Left cardiac atrium (tissue), 4 donors: ENCODE measurements at regions of chr11 and their contacts with region 1.

Region 1: DNA sequence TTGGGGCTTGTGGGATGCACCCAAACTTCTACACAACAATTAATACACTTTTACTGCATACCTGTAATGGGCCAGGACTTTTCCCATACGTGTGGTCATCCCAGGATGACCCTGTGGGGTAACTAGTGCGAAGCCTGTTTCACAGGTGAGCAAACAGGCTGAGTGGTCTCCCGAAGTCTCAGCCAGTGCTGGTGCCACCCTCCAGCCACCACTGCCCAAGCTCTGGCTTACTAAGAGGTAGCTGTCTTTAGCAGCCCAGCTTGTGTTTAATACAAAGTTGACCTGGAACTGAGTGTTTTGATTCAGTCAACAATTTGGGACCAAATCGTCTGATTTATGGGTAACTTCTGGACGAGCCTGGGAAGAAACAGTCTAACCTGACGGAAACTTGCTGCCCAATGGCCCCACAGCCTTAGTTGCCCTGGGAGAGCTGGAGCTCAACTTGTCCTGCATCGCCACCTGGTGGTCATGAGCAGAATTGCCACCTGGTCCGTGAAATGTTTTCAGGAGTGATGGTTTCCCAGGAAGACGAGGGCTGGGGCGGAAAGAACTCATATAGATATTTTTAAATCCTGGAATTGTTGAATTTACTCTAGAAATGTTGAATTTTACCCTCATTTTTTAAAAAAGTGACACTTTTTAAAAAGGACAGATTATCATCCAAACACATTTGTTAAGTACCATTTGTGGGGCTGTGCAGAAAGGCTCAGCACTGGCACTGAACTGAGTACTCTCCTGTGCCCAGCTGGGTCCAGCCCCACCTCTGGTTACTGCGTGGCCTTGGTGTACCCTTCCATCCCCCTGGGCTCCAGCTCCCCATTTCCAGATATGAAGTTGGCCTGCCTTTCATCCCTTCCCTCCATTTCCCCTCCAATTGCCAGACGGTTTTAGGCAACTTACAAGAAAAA is 95.5 kb upstream of the PARVA start:
- DNase-seq: peak; percentile 86
- ATAC-seq: peak; percentile 63 to 65

Region 2: GRCh38 chr11:11798586-11799438 is 483.0 kb before region 1 on chr11:
- intact Hi-C with region 1: loop called (anchors 5 kb)
- DNase-seq: peak; percentile 87
- ATAC-seq: peak; percentile 71 to 91

Region 3: DNA sequence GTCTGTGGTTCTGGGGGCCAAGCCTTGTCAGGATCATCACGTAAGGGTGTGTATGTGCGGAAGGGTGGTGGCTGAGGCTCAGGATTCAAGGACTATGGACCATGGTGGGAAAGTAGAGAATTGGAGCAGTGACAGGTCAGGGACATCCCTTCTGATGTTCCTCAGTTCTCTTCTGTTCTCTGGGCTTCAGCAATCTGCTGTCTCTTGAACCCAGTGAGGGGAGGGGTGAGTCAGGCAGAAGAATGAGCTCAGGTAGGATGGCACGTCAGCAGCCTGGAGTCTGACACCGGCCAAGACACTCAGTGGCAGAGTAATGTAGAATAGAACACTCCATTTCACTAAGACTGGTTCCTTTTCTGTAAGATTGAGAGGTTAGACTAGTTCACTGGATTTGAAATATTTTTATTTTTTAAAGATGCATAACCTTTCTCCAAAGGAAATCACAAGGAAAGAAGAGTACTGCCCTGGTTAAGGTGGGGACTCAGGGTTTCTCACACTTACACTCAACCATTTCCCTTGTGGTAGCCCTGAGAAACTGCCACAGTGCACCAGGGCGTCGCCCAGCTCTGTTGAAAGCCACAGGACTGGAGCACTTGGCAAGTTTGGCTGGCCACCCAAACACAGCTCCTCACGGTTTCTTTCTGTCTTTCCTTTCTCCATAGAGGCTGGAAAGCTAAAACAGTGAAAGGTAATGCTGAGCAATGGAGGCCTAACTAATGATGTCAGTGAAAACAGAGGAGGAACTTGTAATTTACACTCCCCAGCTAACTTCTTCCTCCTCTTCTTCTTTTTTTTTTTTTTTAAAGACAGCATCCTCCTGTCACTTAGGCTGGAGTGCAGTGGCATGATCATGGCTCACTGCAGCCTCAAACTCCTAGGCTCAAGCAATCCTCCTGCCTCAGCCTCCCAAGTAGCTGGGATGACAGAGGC is 194.5 kb before region 1 on chr11:
- intact Hi-C with region 1: loop called in 1 of 2 experiments (anchors 2 kb)
- DNase-seq: peak; percentile 48
- ATAC-seq: peak in 1 of 2 donors; percentile 42

Region 4: DNA sequence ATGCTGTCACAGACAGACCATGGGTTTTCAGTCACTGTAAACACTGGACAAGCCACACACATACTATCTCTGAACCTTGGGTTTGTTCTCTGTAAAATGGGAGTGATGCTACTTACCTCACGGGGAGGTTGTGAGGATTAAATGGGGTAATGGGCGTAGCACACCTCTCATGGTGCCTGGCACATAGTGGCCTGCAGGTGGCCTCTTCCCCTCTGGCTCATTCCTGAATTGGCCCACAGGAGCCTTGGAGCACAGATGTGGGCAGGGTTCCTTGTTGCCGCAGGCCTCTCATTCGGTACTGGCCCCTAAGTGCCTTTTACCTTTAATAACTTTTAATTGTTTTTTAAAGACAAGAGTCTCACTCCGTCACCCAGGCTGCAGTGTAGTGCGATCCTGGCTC is 159.7 kb before region 1 on chr11:
- intact Hi-C with region 1: no loop called
- DNase-seq: no peak
- ATAC-seq: no peak

Region 5: DNA sequence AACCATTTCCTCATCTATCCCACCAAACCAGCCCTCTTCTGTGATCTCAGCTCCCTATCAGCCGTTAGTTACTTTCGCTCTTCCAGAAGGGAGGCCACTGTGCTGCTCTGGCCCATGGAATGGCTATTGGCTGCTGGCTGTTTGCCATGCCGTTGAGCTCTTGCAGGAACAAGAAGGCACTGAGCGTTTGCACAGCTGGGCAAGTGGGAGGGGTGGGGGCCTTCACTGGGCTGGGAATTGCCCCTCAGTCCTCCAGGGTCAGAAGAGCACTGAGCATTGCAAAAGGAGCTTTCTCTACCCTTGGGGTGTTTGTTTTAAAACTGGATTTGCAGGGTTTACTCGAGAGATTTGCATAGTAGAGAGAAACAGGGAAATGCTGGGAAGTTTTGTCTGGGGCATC is 33.5 kb before region 1 on chr11:
- intact Hi-C with region 1: no loop called
- DNase-seq: peak; percentile 81
- ATAC-seq: peak; percentile 57 to 76

Region 6: DNA sequence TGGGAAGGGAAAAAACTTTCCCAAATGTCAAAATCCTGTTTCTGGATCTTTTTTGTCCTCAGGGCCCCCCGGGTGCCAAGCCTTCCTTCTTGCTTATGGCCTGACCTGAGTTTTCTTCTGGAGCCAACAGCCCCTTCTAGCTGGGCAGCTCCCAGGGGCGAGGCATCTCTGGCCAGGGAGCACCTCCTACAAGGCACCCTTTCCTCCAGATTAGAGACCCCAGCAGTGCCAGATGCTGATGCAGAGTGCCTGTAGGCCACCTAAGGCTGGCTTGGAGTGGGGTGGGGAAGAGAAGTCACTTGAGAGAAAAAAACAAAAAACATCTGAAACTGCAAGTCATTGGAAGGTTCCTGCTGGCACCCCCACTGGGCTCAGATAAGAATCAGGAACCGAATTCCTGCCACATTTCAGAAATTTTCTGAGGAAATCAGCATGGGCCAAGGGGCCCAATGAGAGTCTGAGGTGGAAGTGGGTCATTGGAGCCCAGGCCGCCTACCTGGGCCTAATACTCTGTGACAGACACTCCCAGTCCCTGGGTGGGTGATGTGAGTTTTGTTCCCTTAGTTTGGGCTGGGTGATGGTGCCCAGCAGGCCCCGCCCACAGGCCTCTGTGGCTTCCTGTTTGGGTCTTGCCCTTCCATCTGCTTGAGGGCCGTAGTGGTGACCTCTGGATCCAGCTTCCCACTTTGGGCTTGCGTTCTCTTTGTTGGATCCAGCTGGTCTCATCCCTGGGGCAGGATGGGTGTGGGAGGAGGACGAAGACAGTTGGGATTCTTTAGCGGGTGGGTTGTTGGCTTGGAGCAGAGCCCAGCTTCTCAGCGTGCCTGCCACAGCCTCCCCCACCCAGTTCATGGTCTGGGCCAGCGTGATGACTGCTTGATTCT is 136.1 kb after region 1 on chr11:
- intact Hi-C with region 1: no loop called
- DNase-seq: peak; percentile 38
- ATAC-seq: peak; percentile 67 to 90

Region 7: DNA sequence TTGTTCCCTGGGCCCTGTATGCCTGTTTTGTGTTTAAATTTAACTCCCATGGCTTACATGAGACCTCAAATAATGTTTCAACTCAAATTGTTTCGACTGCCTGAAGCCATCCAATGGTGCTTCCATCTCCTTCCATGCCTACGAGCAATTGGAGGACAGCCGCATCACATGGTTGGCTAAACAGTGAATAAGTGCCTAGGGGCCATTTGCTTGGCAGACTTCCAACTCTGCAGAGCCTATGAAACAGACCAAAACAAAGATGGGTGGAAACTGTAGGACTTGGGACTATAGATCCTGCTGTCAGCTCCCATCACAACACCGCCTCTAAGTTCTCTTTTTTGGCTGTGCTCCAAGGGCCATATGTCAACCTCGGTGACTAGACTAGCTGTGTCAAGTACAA is 179.7 kb after region 1 on chr11:
- intact Hi-C with region 1: no loop called
- DNase-seq: no peak
- ATAC-seq: no peak